ENCODE measurements at regions of chr18 and their contacts with region 1.

Region 1: DNA sequence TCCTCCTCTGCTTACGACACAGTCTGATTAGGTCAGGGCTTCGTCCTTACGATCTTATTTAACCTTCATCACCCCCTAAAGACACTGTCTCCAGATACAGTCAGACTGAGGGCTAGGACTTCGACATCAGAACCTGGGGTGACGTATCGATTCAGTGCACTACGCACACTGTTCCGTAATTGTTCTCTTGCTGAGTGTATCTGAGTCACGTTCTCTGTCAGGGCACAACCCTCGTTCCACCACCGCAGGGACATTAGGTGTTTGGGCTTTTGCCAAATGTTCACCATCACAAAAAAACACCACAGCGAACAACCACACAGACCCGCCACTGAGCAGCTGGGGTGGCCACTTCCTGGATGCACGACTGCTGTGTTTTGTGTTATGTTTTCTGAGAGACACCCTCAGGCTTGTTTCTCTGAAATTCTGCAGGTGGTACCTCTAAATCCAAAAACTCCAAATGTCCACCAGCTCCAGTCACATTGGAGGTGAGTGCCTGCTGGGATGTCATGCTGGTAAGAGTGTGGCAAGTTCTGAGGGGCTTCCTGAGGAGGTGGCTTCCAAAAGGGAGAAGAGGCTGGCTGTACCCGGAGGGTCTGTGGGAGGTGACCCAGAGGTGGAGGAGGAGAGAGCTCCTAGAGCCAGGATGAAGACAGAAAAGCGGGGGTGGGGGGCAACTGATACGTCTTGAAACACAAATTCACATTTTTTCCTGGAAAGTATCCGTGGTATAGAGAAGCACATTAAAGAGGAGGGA is 66.6 kb downstream of the ADNP2 start:
- DNase-seq: no peak
- H3K4me3 ChIP-seq: no peak overlapping the region
- H3K27ac ChIP-seq: no peak overlapping the region
- H3K4me1 ChIP-seq: no peaks in the 10 kb centered on the region
- H3K27me3 ChIP-seq: no peaks in the 10 kb centered on the region
- CTCF ChIP-seq: no peak

Region 2: GRCh38 chr18:80253871-80254492 is 78.4 kb after region 1 on chr18:
- CTCF ChIA-PET with region 1: interaction called, 3 read pairs
- POLR2A ChIA-PET with region 1: interaction called, 10 read pairs
- intact Hi-C with region 1: no loop called
- DNase-seq: peak; percentile 14
- H3K4me3 ChIP-seq: no peak overlapping the region
- H3K27ac ChIP-seq: no peak overlapping the region
- H3K4me1 ChIP-seq: no peaks in the 10 kb centered on the region
- H3K27me3 ChIP-seq: no peaks in the 10 kb centered on the region
- CTCF ChIP-seq: no peak